ENCODE measurements at regions of chr7 and their contacts with region 1.

Region 1: DNA sequence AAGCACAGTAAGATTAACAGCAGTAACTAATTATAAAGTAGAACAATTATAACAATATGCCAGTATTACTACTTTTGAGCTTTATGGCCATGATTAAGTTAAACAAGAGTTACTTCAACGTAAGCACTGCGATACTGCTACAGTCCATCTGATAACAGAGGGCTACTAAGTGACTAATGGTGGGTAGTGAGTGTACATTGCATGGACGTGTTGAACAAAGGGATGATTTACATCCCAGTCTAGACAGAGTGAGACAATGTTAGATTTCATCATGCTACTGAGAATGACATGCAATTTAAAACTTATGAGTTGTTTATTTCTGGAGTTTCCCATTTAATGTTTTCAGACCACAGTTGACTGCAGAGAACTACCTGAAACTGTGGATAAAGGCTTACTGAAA is 45.6 kb downstream of the TPST1 start:
- DNase-seq: peak; percentile 67
- ATAC-seq: peak; percentile 81
- H3K4me3 ChIP-seq: no peak overlapping the region
- H3K27ac ChIP-seq: no peak overlapping the region
- H3K4me1 ChIP-seq: peaks cover 7% of the 10 kb centered on the region; the same call in 1 of the 2 replicates
- H3K27me3 ChIP-seq: no peaks in the 10 kb centered on the region
- CTCF ChIP-seq: no peak

Region 2: DNA sequence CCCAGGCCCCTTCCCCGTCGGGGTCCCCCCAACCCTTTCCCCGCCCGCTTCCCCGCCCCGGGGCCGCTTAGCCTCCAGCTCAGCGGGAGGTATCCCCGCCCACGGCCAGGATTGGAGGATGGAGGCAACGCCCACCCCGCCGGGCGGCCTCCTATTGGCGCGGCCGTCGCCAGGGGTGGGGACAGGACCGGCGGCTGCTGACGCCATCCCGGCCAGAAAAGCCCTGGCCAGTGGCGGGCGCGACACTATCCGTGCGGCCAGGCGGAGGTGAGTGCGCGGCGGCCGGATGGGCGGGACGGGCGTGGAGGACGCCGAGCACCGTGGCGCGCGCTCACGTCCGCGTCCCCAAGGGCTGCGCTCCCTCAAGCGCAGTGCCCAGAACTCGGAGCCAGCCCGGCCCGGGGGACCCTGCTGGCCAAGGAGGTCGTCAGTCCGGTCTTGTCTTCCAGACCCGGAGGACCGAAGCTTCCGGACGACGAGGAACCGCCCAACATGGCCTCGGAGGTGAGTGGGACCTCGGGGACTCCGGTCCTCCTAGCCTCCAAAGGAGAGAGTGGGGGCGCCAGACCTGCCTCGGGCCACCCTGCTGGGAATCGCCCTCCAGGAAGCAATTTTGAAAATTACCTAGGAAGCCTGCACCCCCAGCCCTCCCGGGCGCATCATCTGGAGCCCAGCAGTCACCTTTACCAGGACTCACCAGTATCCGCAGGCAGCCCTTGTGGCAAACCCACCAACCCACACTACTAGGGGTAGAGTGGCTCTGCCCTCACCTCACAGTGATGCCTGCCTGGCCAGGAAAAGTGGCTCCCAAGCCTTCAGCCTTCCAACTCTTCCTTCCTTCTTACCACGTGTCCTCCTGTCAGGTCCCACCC is 174.9 kb before region 1 on chr7 and contains the start of gene ASL:
- CTCF ChIA-PET with region 1: no interaction called
- POLR2A ChIA-PET with region 1: no interaction called
- intact Hi-C with region 1: no loop called
- DNase-seq: peak; percentile 94
- ATAC-seq: peak; percentile 99
- H3K4me3 ChIP-seq: peak within 1 kb of the TSS; percentile 96
- H3K27ac ChIP-seq: no peak within 1 kb of the TSS
- H3K4me1 ChIP-seq: peaks cover 10% of the 10 kb centered on the region; the same call in 1 of the 2 replicates
- H3K27me3 ChIP-seq: no peaks in the 10 kb centered on the region
- CTCF ChIP-seq: no peak
- total RNA-seq, gene ASL: 55.9 and 69.0 TPM in 2 replicates

Region 3: GRCh38 chr7:66198956-66199355 is 51.8 kb before region 1 on chr7:
- CTCF ChIA-PET with region 1: no interaction called
- POLR2A ChIA-PET with region 1: no interaction called
- intact Hi-C with region 1: no loop called
- DNase-seq: no peak
- ATAC-seq: no peak
- H3K4me3 ChIP-seq: no peak overlapping the region
- H3K27ac ChIP-seq: no peak overlapping the region
- H3K4me1 ChIP-seq: no peaks in the 10 kb centered on the region
- H3K27me3 ChIP-seq: no peaks in the 10 kb centered on the region
- CTCF ChIP-seq: no peak

Region 4: DNA sequence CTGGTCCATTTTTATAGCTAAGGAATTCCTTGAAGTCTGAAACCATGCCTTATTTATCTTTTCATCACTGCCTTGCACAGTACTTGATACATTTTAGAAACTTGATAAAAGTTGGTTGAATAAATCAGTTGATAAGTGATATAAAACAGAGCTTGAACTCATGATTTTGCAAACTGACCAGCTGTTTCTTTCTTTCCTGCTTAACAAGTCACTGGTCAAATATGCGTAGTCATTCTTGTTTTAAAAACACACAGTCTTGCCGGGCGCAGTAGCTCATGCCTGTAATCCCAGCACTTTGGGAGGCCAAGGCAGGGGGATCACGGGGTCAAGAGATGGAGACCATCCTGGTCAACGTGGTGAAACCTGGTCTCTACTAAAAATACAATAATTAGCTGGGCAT is 39.3 kb before region 1 on chr7:
- CTCF ChIA-PET with region 1: no interaction called
- POLR2A ChIA-PET with region 1: no interaction called
- intact Hi-C with region 1: loop called (anchors 5 kb)
- DNase-seq: no peak
- ATAC-seq: no peak
- H3K4me3 ChIP-seq: no peak overlapping the region
- H3K27ac ChIP-seq: no peak overlapping the region
- H3K4me1 ChIP-seq: peaks cover 2% of the 10 kb centered on the region
- H3K27me3 ChIP-seq: no peaks in the 10 kb centered on the region
- CTCF ChIP-seq: no peak

Region 5: DNA sequence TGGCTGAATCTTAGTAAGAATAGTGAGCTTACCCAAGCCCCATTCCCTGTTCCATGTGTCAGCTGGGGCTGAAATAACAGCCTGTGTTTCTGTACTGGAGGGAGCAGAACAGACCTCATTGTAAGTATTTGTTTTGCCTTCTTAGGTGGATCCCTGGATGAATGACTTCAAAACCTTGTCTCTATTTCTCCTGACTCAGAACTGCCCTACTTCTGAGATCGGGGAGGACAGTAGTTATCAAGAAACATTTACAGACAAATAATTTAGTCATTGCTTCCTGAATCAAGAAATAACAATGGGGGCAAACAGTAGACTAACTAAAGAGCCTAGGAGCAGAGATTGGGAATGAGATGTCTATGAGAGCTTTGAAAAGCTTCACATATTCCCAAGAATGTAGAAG is 13.2 kb after region 1 on chr7:
- CTCF ChIA-PET with region 1: no interaction called
- POLR2A ChIA-PET with region 1: interaction called, 10 read pairs
- intact Hi-C with region 1: no loop called
- DNase-seq: no peak
- ATAC-seq: no peak
- H3K4me3 ChIP-seq: no peak overlapping the region
- H3K27ac ChIP-seq: no peak overlapping the region
- H3K4me1 ChIP-seq: no peaks in the 10 kb centered on the region
- H3K27me3 ChIP-seq: no peaks in the 10 kb centered on the region
- CTCF ChIP-seq: no peak

Measured in PC-3 (cell line).